ENCODE measurements at regions of chr6 and their contacts with region 1.

Region 1: DNA sequence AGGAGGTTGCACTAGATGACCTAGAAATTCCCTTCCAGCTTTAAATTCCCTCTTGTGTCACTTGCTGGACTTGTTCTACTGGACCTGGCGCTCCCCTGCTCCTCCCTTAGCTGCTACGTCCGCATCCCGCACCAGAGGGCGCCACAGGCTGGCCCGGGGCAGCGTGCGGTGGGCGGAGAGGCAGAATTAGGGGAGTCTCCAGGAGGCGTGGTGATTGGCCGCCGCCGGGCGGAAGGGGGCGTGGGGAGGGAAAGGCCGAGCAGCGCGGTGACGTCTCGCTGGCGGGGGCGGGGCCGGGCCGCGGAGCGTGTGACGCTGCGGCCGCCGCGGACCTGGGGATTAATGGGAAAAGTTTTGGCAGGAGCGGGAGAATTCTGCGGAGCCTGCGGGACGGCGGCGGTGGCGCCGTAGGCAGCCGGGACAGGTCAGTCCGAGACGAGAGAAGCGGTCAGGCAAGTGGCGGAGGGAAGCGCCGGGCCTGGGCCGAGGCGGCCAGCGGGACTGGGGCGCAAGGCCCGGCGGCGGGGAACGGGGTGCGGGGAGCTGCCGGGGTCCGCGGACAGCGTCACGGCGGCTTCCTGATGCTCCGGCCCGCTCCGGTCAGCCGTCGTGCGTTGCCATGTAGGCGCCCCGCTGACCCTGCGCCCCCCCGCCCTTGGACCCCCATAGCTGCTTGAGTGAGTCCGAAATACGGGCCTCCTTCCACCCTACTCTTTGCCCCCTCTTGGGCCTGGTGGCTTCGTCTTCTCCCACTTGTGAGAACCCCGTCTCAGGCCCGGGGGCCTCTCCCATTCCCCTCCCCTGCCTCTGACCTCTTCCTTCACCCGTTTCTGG is at the start of gene PPARD:
- DNase-seq: peak; percentile 95 to 100 (median 99)

Region 2: GRCh38 chr6:35248300-35248699 is 94.2 kb before region 1 on chr6:
- intact Hi-C with region 1: no loop called
- DNase-seq: no peak

Region 3: DNA sequence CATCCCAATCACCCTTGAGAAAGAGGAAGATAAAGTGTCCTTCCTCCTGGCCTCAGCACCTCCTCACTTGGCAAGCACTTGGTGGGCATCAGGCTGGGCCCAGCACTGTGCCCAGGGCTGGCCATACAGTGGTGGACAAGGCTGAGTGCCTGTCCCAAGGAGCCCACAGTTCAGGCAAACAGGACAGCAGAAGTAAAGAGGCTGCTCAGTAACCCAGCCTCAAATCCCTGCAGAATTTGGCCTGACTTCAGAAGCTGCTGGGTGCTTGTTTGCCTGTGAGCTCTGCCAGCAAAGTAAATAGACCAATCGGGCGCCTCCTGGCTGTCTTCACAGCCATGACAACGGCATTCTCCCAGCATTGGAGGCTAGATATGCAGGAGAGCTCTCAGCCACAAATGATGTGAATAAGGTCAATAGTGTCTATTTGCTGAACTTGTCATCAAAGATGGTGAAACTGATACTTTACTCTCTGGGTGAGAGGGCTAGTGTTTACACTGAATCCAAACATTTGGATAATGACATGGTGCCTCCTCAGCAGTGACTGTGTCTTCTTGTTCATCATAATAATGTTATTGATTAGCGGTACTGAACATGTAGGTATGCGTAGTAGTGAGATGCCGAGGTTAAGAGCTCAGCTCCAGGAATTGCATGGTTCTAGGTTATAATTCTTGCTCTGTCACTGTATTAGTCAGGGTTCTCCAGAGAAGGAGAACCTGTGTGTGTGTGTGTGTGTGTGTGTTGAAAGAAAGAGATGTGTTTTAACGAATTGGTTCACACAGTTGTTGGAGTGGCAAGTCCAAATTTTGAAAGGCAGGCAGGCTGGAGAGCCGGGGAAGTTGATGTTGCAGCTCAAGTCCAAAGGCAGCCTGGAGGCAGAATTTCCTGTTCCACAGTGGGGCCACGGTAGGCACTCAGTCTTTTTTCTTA is 72.9 kb after region 1 on chr6:
- intact Hi-C with region 1: loop called (anchors 2 kb)
- DNase-seq: peak; percentile 48 to 93 (median 84)

Region 4: DNA sequence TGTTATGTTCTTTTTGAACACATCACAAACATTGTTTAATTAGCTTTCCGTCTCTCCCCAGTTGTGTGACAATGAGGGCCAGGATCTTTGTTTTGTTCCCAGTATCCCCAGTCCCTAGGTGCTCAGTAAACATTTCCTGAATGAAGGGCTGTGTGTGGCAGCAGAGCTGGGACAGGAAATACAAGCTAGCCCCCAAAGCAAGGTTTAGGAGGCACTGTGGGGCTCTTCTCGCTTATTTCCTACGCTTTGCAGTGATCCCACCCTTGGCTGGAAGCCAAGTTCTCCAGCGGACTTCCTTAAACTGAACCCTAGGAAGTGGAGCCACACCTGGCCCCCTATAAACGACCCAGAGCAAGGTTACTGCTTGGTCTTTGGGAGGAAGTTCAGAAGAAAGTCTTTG is 108.9 kb after region 1 on chr6:
- intact Hi-C with region 1: loop called (anchors 2 kb)
- DNase-seq: no peak

Region 5: DNA sequence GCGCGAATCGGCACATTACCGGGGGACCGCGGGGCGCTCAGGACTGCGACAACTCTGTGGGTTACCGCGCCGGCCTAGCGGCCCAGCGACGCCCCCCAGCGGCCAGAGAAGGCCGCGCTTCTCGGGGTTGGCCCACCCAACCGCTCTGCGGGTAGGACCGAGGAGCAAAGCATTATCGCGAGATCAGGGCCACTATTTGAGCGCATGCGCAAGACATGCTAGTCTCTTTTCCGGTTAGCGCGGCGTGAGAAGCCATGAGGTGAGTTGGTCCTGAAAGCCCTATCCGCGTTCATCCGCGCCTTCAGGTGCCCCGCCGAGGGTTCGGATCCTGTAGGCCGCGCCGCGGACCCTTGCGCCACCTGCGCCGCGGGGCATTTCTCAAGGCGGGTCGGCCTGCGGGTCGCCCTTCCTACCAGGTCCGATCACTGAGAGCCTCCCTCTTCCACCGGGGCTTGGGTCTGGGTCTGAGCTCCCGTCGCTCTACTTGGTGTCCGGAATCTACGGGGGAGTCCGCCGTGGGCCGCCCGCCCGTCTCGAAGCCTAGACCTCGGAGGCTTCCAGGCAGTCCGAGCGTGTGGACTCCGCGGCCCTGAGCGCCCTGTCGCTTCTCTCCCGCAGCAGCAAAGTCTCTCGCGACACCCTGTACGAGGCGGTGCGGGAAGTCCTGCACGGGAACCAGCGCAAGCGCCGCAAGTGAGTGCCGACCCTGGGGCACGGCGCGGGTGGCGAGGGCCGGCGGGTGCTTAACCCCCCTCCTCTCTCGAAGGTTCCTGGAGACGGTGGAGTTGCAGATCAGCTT is 125.9 kb after region 1 on chr6 and contains the start of gene RPL10A:
- intact Hi-C with region 1: loop called (anchors 1 kb)
- DNase-seq: peak; percentile 91 to 98 (median 96)

Measured in head of caudate nucleus (tissue), 42 donors.